ENCODE measurements at regions of chr10 and their contacts with region 1.

Region 1: DNA sequence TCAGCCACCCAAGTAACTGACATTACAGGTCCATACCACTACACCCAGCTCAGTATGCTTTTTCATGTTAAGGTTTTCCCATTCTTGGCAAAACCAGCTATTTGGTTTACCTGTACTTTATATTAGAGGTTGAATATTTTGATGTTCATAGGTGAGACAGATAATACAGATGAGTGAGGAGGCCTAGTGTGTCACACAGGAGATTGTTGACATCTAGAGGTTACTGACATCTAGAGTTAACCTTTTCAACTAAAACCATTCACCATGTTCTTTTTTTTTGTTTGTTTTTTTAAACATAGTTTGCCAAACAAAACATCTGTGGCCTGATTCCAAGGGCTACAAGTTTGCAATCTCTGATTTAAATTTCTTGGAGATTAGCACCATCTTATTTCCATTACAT is 8.0 kb downstream of the GHITM start:
- DNase-seq: no peak
- ATAC-seq: no peak
- H3K4me3 Mint-ChIP-seq: no peak overlapping the region
- H3K27ac Mint-ChIP-seq: no peak overlapping the region
- H3K4me1 Mint-ChIP-seq: peaks cover 24% of the 10 kb centered on the region
- H3K27me3 Mint-ChIP-seq: no peaks in the 10 kb centered on the region
- CTCF ChIP-seq: no peak

Region 2: DNA sequence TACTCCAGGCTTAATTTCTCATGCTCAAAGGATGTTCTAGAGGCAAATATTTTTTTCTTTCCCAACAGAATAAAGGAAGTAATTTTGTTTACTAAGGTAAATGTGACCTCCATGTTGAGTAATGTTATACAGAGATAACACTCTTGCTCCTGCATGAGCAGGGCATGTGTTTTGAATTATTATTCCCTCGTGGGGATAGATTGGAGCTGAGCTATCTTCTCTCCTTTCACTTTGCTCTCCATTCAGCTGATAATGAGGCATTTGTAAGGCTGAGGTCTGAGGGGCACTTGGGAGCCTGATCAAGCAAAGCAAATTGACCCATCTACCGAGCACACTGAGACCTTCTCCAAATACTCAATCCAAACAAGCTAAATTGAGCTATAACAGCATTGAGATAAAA is 58.7 kb before region 1 on chr10:
- CTCF ChIA-PET with region 1: no interaction called
- POLR2A ChIA-PET with region 1: no interaction called
- intact Hi-C with region 1: no loop called
- DNase-seq: no peak
- ATAC-seq: no peak
- H3K4me3 Mint-ChIP-seq: no peak overlapping the region
- H3K27ac Mint-ChIP-seq: no peak overlapping the region
- H3K4me1 Mint-ChIP-seq: no peaks in the 10 kb centered on the region
- H3K27me3 Mint-ChIP-seq: peaks cover 23% of the 10 kb centered on the region
- CTCF ChIP-seq: no peak

Region 3: DNA sequence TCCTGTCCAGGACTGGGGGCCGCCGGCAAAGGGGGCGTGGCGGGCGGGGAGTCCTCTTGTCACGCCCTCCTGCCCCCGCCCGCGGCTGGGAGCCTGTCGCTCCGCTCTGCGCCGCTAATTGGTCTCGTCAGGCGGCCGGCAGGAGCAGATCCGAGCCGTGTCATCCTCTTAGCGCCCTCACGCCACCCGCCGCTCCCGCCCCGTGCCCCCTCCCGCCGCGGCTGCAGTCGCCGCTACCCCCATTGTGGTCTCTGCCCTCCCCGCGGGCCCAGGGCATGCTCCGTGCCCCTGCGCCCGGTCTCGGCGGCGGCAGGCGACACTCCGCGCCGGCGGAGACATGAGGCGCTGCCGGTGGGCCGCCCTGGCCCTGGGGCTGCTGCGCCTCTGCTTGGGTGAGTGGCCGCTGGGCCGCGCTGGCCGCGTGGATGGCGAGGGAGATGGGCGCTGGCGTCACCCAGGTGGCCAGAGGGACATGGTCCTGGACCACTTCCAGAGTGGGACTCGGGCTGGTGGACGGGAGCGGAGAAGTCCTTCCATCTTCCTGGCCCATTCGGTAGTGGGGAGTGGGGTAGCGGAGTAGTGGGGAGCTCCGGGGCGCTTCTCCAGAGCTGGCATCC is 47.2 kb after region 1 on chr10 and contains the start of gene CDHR1:
- CTCF ChIA-PET with region 1: interaction called, 12 read pairs
- POLR2A ChIA-PET with region 1: interaction called, 4 read pairs
- intact Hi-C with region 1: no loop called
- DNase-seq: peak; percentile 72
- ATAC-seq: peak; percentile 92
- H3K4me3 Mint-ChIP-seq: peak within 1 kb of the TSS; percentile 57
- H3K27ac Mint-ChIP-seq: no peak within 1 kb of the TSS
- H3K4me1 Mint-ChIP-seq: peaks cover 10% of the 10 kb centered on the region
- H3K27me3 Mint-ChIP-seq: peaks cover 10% of the 10 kb centered on the region
- CTCF ChIP-seq: no peak
- total RNA-seq, gene CDHR1: 1.8 to 2.4 TPM

Region 4: GRCh38 chr10:84214612-84215235 is 67.4 kb after region 1 on chr10:
- CTCF ChIA-PET with region 1: interaction called, 46 read pairs
- POLR2A ChIA-PET with region 1: no interaction called
- intact Hi-C with region 1: loop called (anchors 5 kb)
- DNase-seq: peak; percentile 52
- ATAC-seq: peak; percentile 80
- H3K4me3 Mint-ChIP-seq: no peak overlapping the region
- H3K27ac Mint-ChIP-seq: no peak overlapping the region
- H3K4me1 Mint-ChIP-seq: no peaks in the 10 kb centered on the region
- H3K27me3 Mint-ChIP-seq: no peaks in the 10 kb centered on the region
- CTCF ChIP-seq: peak; percentile 30

Measured in activated CD8-positive, alpha-beta T cell treated with anti-CD3 and anti-CD28 coated beads for 36 hours (primary cell).